PC-3 (cell line): ENCODE measurements at regions of chr1 and their contacts with region 1.

Region 1: DNA sequence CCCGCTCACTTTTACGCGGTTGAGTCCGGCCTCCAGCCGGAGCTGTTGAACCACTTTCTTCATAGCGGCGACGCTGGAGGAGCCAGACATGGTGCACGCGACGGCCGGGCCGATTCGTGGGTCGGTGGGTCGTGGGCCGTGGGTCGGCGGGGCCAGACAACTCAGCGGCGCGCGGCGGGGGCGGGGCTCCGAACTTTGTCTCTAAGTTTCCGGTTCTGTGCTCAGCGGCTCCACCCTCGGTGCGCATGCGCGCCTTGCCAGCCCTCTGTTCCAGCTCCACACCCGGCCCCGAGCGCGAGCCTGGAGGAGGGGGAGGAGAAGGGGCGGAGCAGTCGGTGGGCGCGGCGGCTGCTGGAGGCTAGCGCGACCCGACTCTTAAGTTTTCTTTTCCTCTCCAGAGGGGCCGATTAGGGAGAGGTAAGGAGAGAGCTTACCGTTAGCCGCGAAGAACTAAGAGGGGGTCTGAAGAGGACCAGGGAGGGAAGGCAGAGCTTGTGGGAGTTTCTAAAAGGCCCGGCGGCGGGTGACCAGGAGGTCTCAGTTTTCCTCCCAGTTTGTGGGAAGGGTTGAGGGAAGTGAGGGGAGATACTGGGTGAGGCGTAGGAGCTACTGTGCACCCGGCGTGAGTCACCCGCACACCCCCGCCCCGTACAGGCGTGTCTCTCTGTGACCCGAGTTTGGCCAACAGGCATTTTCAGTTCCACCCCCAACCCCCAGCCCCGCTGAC is at the starts of genes GNG5 and SPATA1:
- DNase-seq: peak; percentile 96
- ATAC-seq: peak; percentile 81
- H3K4me3 ChIP-seq: peak within 1 kb of the TSS; percentile 83
- H3K27ac ChIP-seq: peak within 1 kb of the TSS; percentile 94
- H3K4me1 ChIP-seq: peaks cover 26% of the 10 kb centered on the region
- H3K27me3 ChIP-seq: no peaks in the 10 kb centered on the region
- CTCF ChIP-seq: no peak
- total RNA-seq, gene GNG5: 39.9 and 49.9 TPM in 2 replicates
- total RNA-seq, gene SPATA1: 2.9 TPM in 1 of 2 replicates, not detected in the other

Region 2: GRCh38 chr1:84442256-84442655 is 63.9 kb before region 1 on chr1:
- CTCF ChIA-PET with region 1: interaction called, 6 read pairs
- POLR2A ChIA-PET with region 1: no interaction called
- intact Hi-C with region 1: loop called (anchors 5 kb)
- DNase-seq: peak; percentile 93
- ATAC-seq: peak; percentile 93
- H3K4me3 ChIP-seq: no peak overlapping the region
- H3K27ac ChIP-seq: peak overlapping the region; percentile 57
- H3K4me1 ChIP-seq: peaks cover 12% of the 10 kb centered on the region
- H3K27me3 ChIP-seq: no peaks in the 10 kb centered on the region
- CTCF ChIP-seq: peak; percentile 84

Region 3: DNA sequence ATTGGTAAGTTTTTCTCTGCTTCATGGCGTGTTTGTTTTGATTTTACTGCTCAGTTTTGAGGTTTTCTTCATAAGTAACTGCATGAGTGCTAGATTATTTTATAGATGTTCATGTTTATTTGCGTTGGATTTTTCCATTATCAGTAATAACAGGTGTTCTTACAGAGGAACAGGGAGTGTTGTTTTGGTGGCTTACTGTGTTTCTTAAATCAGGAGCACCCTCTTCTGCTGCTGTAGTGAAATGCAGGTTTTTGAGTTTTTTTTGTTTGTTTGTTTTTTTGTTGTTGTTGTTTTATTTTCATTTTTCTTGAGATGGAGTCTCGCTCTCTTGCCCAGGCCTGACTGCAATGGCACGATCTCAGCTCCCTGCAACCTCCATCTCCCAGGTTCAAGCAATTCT is 35.5 kb after region 1 on chr1:
- CTCF ChIA-PET with region 1: interaction called, 5 read pairs
- POLR2A ChIA-PET with region 1: no interaction called
- intact Hi-C with region 1: loop called (anchors 1 kb)
- DNase-seq: peak; percentile 14
- ATAC-seq: no peak
- H3K4me3 ChIP-seq: no peak overlapping the region
- H3K27ac ChIP-seq: no peak overlapping the region
- H3K4me1 ChIP-seq: peaks cover 16% of the 10 kb centered on the region
- H3K27me3 ChIP-seq: no peaks in the 10 kb centered on the region
- CTCF ChIP-seq: peak; percentile 65

Region 4: DNA sequence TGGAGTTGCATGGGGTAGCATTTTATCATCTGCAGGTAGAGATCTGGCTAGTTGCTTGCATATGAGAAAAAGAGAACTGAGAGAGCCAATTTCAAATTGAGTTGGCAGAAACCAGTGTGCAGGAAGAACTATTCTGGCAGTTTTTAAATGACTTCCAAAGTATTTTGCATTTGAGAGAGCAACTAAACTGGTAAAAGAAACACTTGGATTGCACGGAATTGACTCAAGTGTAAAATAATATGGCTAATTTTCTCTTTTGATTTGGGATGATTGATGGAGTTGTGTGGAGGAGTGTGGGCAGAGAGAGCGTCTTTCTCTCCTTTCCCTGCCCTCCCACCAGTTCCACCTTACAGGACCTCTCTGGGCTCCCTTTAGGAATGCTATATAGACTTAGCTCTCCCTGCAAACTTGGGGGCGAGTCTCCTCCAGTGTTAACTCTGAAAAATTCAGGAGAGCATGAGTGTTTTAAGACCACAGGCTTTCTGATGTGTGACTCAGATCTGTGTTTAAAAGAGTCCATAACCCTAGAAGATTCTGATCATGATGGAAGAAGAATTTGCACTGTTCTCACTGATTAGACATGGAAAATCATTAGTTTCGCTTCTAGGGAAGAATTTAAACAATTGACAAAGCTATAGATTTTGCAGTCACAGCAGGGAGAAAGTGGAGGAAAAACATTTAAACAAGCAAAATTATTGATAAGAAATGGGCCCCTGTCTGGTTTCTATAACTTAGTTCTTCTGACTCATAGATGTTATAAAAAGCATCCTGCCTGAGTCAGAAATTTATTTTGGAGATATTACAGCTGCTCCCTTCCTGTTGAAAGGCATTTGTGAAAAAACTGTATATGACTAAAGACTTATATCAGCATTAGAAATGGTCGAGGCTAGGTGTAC is 92.9 kb after region 1 on chr1:
- CTCF ChIA-PET with region 1: interaction called, 3 read pairs
- POLR2A ChIA-PET with region 1: interaction called, 4 read pairs
- intact Hi-C with region 1: loop called (anchors 1 kb)
- DNase-seq: peak; percentile 92
- ATAC-seq: peak; percentile 64
- H3K4me3 ChIP-seq: peak overlapping the region; percentile 47
- H3K27ac ChIP-seq: peak overlapping the region; percentile 97
- H3K4me1 ChIP-seq: peaks cover 37% of the 10 kb centered on the region
- H3K27me3 ChIP-seq: no peaks in the 10 kb centered on the region
- CTCF ChIP-seq: no peak

Region 5: DNA sequence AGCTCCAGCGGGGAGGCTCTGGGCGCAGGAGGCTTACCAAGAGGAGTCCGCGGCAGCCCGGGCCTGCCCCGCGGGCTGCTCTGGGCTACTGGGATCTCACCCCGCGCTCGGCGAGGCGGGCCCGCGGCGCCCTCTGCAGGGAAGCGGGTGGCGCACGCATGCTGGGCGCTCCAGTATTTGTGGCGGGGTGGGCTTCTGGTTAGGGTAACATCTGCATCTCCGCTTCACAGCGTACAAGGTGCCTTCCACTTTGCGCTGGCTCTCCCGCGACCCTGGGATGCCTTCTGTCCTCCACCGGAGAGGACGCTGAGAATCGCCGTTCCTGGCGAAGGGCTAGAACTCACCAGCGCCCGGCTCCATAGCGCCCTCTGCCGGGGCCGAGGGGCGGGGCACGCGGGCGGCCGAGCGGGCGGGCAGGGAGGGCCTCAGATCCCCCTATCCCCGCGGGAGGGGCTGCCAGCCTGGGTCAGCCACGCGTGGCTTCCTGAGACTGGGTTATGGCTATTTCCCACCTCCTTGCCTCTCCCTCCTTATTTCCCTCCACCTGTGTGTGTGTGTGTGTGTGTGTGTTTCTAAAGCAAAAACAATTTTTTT is 114.7 kb after region 1 on chr1:
- CTCF ChIA-PET with region 1: interaction called, 6 read pairs
- POLR2A ChIA-PET with region 1: interaction called, 6 read pairs
- intact Hi-C with region 1: loop called (anchors 1 kb)
- DNase-seq: peak; percentile 84
- ATAC-seq: peak; percentile 83
- H3K4me3 ChIP-seq: peak overlapping the region; percentile 81
- H3K27ac ChIP-seq: peak overlapping the region; percentile 84
- H3K4me1 ChIP-seq: peaks cover 24% of the 10 kb centered on the region
- H3K27me3 ChIP-seq: no peaks in the 10 kb centered on the region
- CTCF ChIP-seq: peak; percentile 98